ENCODE measurements at regions of chr16 and their contacts with region 1.

Region 1: GRCh38 chr16:11356573-11357331 is 11.5 kb downstream of the RMI2 start:
- DNase-seq: peak in 8 of 9 experiments; percentile 38 to 75 (median 62)
- ATAC-seq: no peak
- H3K4me3 ChIP-seq: no peak overlapping the region
- H3K4me3 Mint-ChIP-seq: no peak overlapping the region
- H3K27ac ChIP-seq: no peak overlapping the region
- H3K27ac Mint-ChIP-seq: peak overlapping the region; percentile 37
- H3K4me1 ChIP-seq: peaks cover 50% of the 10 kb centered on the region
- H3K4me1 Mint-ChIP-seq: peaks cover 58% of the 10 kb centered on the region
- H3K27me3 ChIP-seq: peaks cover 0 to 23% of the 10 kb centered on the region in 2 experiments
- H3K27me3 Mint-ChIP-seq: no peaks in the 10 kb centered on the region
- CTCF ChIP-seq: peak; percentile 50

Region 2: GRCh38 chr16:10971560-10971961 is 385.2 kb before region 1 on chr16:
- CTCF ChIA-PET with region 1: interaction called, 25 read pairs
- POLR2A ChIA-PET with region 1: interaction called, 3 read pairs
- intact Hi-C with region 1: loop called (anchors 1 to 2 kb)
- DNase-seq: peak in 3 of 9 experiments; percentile 38 to 75 (median 68)
- ATAC-seq: peak; percentile 48
- H3K4me3 ChIP-seq: no peak overlapping the region
- H3K4me3 Mint-ChIP-seq: no peak overlapping the region
- H3K27ac ChIP-seq: no peak overlapping the region
- H3K27ac Mint-ChIP-seq: no peak overlapping the region
- H3K4me1 ChIP-seq: peaks cover 10% of the 10 kb centered on the region
- H3K4me1 Mint-ChIP-seq: peaks cover 14% of the 10 kb centered on the region
- H3K27me3 ChIP-seq: no peaks in the 10 kb centered on the region
- H3K27me3 Mint-ChIP-seq: no peaks in the 10 kb centered on the region
- CTCF ChIP-seq: peak; percentile 80

Region 3: DNA sequence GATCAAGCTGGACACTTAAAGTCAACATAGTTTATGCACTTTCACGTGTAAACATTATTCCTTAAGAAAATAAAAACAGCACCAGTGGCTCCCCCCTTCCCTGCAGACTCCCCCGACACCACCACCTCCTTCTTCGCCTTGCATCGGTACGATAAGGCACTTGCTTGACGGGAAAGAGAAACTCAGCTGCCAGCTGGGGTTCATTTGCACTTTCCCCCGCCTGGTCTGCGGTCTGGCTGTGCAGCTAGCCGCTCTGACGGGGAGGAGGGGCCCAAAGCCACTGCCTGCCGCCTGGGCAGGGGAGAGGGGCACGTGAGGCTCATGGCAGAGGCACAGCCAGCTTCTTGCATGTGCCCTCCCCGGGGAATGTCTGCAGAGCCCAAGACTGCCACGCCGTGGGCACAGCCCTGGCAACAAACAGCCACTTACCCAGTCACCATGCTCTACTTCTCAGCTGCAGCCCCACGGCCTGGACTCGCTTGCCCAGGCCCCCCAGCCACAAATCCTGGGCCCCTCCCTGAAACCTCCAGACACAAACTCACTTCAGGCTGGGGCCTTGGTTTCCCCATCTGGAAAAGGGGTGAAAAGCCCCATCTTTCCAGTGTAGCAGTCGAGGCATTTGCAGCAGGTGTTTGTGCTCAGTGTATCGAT is 59.1 kb before region 1 on chr16:
- CTCF ChIA-PET with region 1: interaction called, 11 read pairs
- POLR2A ChIA-PET with region 1: no interaction called
- intact Hi-C with region 1: loop called (anchors 2 to 5 kb)
- DNase-seq: peak; percentile 49 to 85 (median 76)
- ATAC-seq: peak; percentile 83
- H3K4me3 ChIP-seq: peak overlapping the region; percentile 20 to 53
- H3K4me3 Mint-ChIP-seq: peak overlapping the region; percentile 76
- H3K27ac ChIP-seq: no peak overlapping the region
- H3K27ac Mint-ChIP-seq: peak overlapping the region; percentile 73
- H3K4me1 ChIP-seq: peaks cover 38% of the 10 kb centered on the region
- H3K4me1 Mint-ChIP-seq: peaks cover 35% of the 10 kb centered on the region
- H3K27me3 ChIP-seq: peaks cover 0 to 4% of the 10 kb centered on the region in 2 experiments
- H3K27me3 Mint-ChIP-seq: peaks cover 2% of the 10 kb centered on the region
- CTCF ChIP-seq: no peak

Region 4: GRCh38 chr16:11312718-11313492 is 43.8 kb before region 1 on chr16:
- CTCF ChIA-PET with region 1: interaction called, 3 read pairs
- POLR2A ChIA-PET with region 1: no interaction called
- intact Hi-C with region 1: loop called in 1 of 2 experiments (anchors 5 kb)
- DNase-seq: peak in 3 of 9 experiments; percentile 28 to 58 (median 33)
- ATAC-seq: peak; percentile 16
- H3K4me3 ChIP-seq: no peak overlapping the region
- H3K4me3 Mint-ChIP-seq: peak overlapping the region; percentile 20
- H3K27ac ChIP-seq: no peak overlapping the region
- H3K27ac Mint-ChIP-seq: peak overlapping the region; percentile 41
- H3K4me1 ChIP-seq: peaks cover 48% of the 10 kb centered on the region
- H3K4me1 Mint-ChIP-seq: peaks cover 48% of the 10 kb centered on the region
- H3K27me3 ChIP-seq: no peaks in the 10 kb centered on the region
- H3K27me3 Mint-ChIP-seq: no peaks in the 10 kb centered on the region
- CTCF ChIP-seq: no peak

Region 5: GRCh38 chr16:11328172-11329070 is 28.3 kb before region 1 on chr16:
- CTCF ChIA-PET with region 1: interaction called, 12 read pairs
- POLR2A ChIA-PET with region 1: no interaction called
- intact Hi-C with region 1: loop called (anchors 1 to 5 kb)
- DNase-seq: peak; percentile 12 to 71 (median 54)
- ATAC-seq: peak; percentile 83
- H3K4me3 ChIP-seq: no peak overlapping the region
- H3K4me3 Mint-ChIP-seq: peak overlapping the region; percentile 63
- H3K27ac ChIP-seq: no peak overlapping the region
- H3K27ac Mint-ChIP-seq: peak overlapping the region; percentile 66
- H3K4me1 ChIP-seq: peaks cover 17% of the 10 kb centered on the region
- H3K4me1 Mint-ChIP-seq: peaks cover 26% of the 10 kb centered on the region
- H3K27me3 ChIP-seq: no peaks in the 10 kb centered on the region
- H3K27me3 Mint-ChIP-seq: no peaks in the 10 kb centered on the region
- CTCF ChIP-seq: no peak

Region 6: GRCh38 chr16:11333711-11334110 is 23.0 kb before region 1 on chr16:
- CTCF ChIA-PET with region 1: interaction called, 12 read pairs
- POLR2A ChIA-PET with region 1: interaction called, 3 read pairs
- intact Hi-C with region 1: loop called (anchors 1 to 5 kb)
- DNase-seq: no peak
- ATAC-seq: no peak
- H3K4me3 ChIP-seq: no peak overlapping the region
- H3K4me3 Mint-ChIP-seq: no peak overlapping the region
- H3K27ac ChIP-seq: no peak overlapping the region
- H3K27ac Mint-ChIP-seq: no peak overlapping the region
- H3K4me1 ChIP-seq: peaks cover 7% of the 10 kb centered on the region
- H3K4me1 Mint-ChIP-seq: peaks cover 6% of the 10 kb centered on the region
- H3K27me3 ChIP-seq: no peaks in the 10 kb centered on the region
- H3K27me3 Mint-ChIP-seq: no peaks in the 10 kb centered on the region
- CTCF ChIP-seq: no peak

Region 7: DNA sequence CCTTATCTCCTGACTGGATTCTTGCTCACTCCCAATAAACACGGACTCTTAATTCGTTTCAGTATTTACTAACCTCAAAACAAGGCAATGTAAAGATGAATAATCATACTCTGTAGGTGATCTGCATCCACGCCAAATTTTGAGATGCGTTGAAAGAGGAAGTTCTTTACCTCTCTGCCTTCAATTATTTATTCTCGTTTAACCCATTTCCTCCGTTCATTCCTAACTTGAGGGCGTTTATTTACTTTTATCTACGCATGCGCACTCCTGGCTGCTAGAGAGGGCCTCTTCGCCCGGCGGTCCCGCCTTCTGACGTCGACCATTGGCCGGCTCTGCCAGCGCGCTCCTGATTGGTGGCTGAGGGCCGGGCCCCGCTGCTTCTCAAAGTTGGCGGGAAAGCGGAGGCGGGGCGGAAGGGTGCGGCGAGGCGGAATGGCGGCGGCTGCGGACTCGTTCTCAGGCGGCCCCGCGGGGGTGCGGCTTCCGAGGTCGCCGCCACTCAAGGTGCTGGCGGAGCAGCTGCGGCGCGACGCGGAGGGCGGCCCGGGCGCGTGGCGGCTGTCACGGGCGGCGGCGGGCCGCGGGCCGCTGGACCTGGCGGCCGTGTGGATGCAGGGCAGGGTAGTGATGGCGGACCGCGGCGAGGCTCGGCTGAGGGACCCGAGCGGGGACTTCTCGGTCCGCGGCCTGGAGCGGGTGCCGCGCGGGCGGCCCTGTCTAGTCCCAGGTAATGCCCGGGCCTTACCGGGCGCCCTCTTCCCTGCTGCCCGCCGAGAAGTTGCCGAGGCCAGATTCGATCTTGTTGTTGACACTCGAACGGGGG is 11.5 kb before region 1 on chr16 and contains the start of gene RMI2:
- CTCF ChIA-PET with region 1: interaction called, 16 read pairs
- POLR2A ChIA-PET with region 1: interaction called, 7 read pairs
- intact Hi-C with region 1: loop called (anchors 1 kb)
- DNase-seq: peak; percentile 90 to 97 (median 95)
- ATAC-seq: peak; percentile 100
- H3K4me3 ChIP-seq: peak within 1 kb of the TSS; percentile 54 to 60
- H3K4me3 Mint-ChIP-seq: peak within 1 kb of the TSS; percentile 84
- H3K27ac ChIP-seq: no peak within 1 kb of the TSS
- H3K27ac Mint-ChIP-seq: peak within 1 kb of the TSS; percentile 83
- H3K4me1 ChIP-seq: no peaks in the 10 kb centered on the region
- H3K4me1 Mint-ChIP-seq: peaks cover 8% of the 10 kb centered on the region
- H3K27me3 ChIP-seq: no peaks in the 10 kb centered on the region
- H3K27me3 Mint-ChIP-seq: no peaks in the 10 kb centered on the region
- CTCF ChIP-seq: no peak
- total RNA-seq, gene RMI2: 0.69 to 0.73 TPM